ENCODE measurements at regions of chr15 and their contacts with region 1.

Region 1: DNA sequence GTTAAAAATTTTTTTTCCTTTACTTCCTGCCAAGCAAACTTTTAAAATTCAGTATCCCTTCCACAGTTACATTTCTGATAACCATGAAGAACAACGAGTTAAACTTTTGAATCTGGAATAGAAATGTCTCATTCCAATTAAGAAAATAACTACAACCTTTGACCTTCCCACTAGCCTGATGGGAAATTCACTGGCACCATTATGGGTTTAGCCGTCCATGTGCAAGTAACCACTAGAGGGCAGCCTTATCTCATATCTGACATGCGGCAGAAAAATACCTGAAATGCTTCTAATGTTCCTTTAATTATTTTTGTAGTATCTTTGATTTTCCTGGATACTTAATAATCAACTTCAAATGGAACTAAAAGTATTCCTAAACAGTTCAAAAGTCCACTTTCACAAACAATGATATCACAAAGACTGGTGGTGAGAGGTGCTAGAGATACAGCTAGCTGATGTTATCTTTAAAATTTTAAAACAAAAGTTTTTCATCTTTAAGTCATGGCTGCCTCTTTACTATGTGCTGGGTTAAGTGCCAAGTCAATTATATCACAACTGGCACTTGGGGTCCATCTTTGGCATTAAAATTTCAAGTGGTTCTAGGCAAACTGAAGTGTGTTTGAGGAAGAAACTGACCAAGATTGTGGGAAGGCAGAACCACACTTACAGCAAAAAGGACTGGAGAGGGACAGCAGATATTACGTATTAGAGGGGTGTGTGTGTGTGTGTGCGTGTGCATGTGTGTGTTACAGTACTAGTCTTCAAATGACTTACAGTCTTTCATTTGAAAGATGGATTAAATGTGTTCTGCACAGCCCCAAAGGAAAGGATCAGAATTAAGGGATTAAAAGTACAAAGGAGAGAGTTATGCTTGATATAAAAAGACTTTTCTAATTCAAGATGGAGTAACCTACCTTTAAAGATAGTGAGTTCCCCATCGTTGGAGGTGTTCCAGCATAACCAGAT is 107.1 kb upstream of the ICE2 start:
- DNase-seq: peak in 7 of 9 donors; percentile 59 to 80 (median 76)
- ATAC-seq: peak; percentile 67
- H3K4me3 ChIP-seq: no peak overlapping the region
- H3K4me3 Mint-ChIP-seq: peak overlapping the region; percentile 66 to 88 (median 75)
- H3K27ac ChIP-seq: peak overlapping the region; percentile 25
- H3K27ac Mint-ChIP-seq: peak overlapping the region; percentile 79 to 93 (median 90)
- H3K4me1 ChIP-seq: peaks cover 65 to 83% of the 10 kb centered on the region in 2 donors
- H3K4me1 Mint-ChIP-seq: peaks cover 55 to 96% (median 87%) of the 10 kb centered on the region in 7 donors
- H3K27me3 ChIP-seq: no peaks in the 10 kb centered on the region
- H3K27me3 Mint-ChIP-seq: peaks cover 0 to 4% (median 0%) of the 10 kb centered on the region in 5 donors

Region 2: GRCh38 chr15:59688841-59689625 is 897.0 kb before region 1 on chr15 and contains the start of gene BNIP2:
- CTCF ChIA-PET with region 1: interaction called, 3 read pairs
- POLR2A ChIA-PET with region 1: no interaction called
- intact Hi-C with region 1: loop called in 1 of 2 experiments (anchors 5 kb)
- DNase-seq: peak; percentile 94 to 100 (median 99)
- ATAC-seq: peak; percentile 95
- H3K4me3 ChIP-seq: peak within 1 kb of the TSS; percentile 97
- H3K4me3 Mint-ChIP-seq: peak within 1 kb of the TSS; percentile 90 to 98 (median 96)
- H3K27ac ChIP-seq: peak within 1 kb of the TSS; percentile 97
- H3K27ac Mint-ChIP-seq: peak within 1 kb of the TSS; percentile 81 to 99 (median 99)
- H3K4me1 ChIP-seq: peaks cover 29 to 30% of the 10 kb centered on the region in 2 donors
- H3K4me1 Mint-ChIP-seq: peaks cover 35 to 57% (median 49%) of the 10 kb centered on the region in 7 donors
- H3K27me3 ChIP-seq: no peaks in the 10 kb centered on the region
- H3K27me3 Mint-ChIP-seq: no peaks in the 10 kb centered on the region
- total RNA-seq, gene BNIP2: 76.1 to 116 (median 87.0) TPM

Region 3: DNA sequence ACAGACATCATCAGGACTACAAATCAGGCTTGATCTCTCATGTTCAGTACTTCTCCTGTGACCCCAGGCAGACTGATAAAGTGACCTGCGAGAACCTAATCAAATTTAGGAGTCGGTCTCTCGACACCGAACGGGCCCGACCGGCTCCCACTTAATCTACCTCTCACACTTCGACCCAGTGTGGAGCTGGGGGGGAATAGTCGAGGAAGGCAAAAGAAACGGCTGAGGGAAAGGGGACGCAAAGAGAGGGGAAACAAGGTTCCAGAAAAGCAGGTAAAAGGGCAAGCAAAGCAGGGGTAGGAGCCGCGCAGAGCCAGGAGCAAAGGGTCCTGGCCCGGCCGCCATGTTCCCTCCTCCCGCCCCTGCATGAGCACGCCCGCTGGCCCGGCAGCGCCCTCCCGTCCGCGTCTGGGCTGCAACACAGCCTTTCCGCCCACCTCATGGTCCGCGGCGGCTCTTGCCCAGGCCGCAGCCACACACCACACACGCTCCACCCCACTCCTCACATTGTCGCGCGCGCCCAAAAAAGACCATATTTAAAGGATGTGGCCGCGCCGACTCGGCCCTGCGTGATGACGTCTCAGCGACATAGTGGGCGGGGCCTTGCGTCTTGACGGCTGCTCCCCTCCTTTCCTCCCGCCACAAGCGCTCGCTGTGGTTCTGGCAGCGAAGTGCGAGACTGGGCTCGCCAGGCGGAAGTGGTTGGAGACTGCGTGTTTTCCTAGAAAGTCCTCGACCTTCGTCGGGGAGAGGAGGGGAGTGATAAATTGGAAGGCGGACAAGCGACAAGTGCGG is 107.3 kb before region 1 on chr15 and contains the start of gene ICE2:
- CTCF ChIA-PET with region 1: no interaction called
- POLR2A ChIA-PET with region 1: interaction called, 7 read pairs
- intact Hi-C with region 1: loop called in 1 of 2 experiments (anchors 2 kb)
- DNase-seq: peak; percentile 89 to 96 (median 94)
- ATAC-seq: peak; percentile 97
- H3K4me3 ChIP-seq: peak within 1 kb of the TSS; percentile 83
- H3K4me3 Mint-ChIP-seq: peak within 1 kb of the TSS; percentile 93 to 100 (median 98)
- H3K27ac ChIP-seq: peak within 1 kb of the TSS; percentile 93
- H3K27ac Mint-ChIP-seq: peak within 1 kb of the TSS; percentile 98 to 100 (median 99)
- H3K4me1 ChIP-seq: peaks cover 23 to 25% of the 10 kb centered on the region in 2 donors
- H3K4me1 Mint-ChIP-seq: peaks cover 43 to 86% (median 70%) of the 10 kb centered on the region in 7 donors
- H3K27me3 ChIP-seq: no peaks in the 10 kb centered on the region
- H3K27me3 Mint-ChIP-seq: no peaks in the 10 kb centered on the region
- total RNA-seq, gene ICE2: 44.8 to 70.9 (median 68.0) TPM

Region 4: GRCh38 chr15:60557191-60557618 is 28.8 kb before region 1 on chr15:
- CTCF ChIA-PET with region 1: interaction called, 11 read pairs
- POLR2A ChIA-PET with region 1: interaction called, 12 read pairs
- intact Hi-C with region 1: no loop called
- DNase-seq: peak in 5 of 9 donors; percentile 36 to 56 (median 51)
- ATAC-seq: peak; percentile 73
- H3K4me3 ChIP-seq: no peak overlapping the region
- H3K4me3 Mint-ChIP-seq: peak overlapping the region; percentile 2 to 67 (median 48)
- H3K27ac ChIP-seq: peak overlapping the region; percentile 51
- H3K27ac Mint-ChIP-seq: peak overlapping the region; percentile 26 to 87 (median 77)
- H3K4me1 ChIP-seq: peaks cover 21 to 48% of the 10 kb centered on the region in 2 donors
- H3K4me1 Mint-ChIP-seq: peaks cover 52 to 83% (median 79%) of the 10 kb centered on the region in 7 donors
- H3K27me3 ChIP-seq: no peaks in the 10 kb centered on the region
- H3K27me3 Mint-ChIP-seq: no peaks in the 10 kb centered on the region

Region 5: GRCh38 chr15:60720493-60721256 is 134.6 kb after region 1 on chr15:
- CTCF ChIA-PET with region 1: interaction called, 3 read pairs
- POLR2A ChIA-PET with region 1: interaction called, 4 read pairs
- intact Hi-C with region 1: loop called in 1 of 2 experiments (anchors 5 kb)
- DNase-seq: peak in 8 of 9 donors; percentile 31 to 68 (median 44)
- ATAC-seq: peak; percentile 81
- H3K4me3 ChIP-seq: peak overlapping the region; percentile 47
- H3K4me3 Mint-ChIP-seq: peak overlapping the region; percentile 64 to 84 (median 80)
- H3K27ac ChIP-seq: peak overlapping the region; percentile 6
- H3K27ac Mint-ChIP-seq: peak overlapping the region; percentile 63 to 92 (median 77)
- H3K4me1 ChIP-seq: peaks cover 27% of the 10 kb centered on the region in 2 donors
- H3K4me1 Mint-ChIP-seq: peaks cover 29 to 65% (median 53%) of the 10 kb centered on the region in 7 donors
- H3K27me3 ChIP-seq: no peaks in the 10 kb centered on the region
- H3K27me3 Mint-ChIP-seq: no peaks in the 10 kb centered on the region

Region 6: GRCh38 chr15:60905587-60905986 is 319.6 kb after region 1 on chr15:
- CTCF ChIA-PET with region 1: interaction called, 10 read pairs
- POLR2A ChIA-PET with region 1: no interaction called
- intact Hi-C with region 1: loop called in 1 of 2 experiments (anchors 1 kb)
- DNase-seq: peak in 6 of 9 donors; percentile 24 to 45 (median 38)
- ATAC-seq: peak; percentile 68
- H3K4me3 ChIP-seq: no peak overlapping the region
- H3K4me3 Mint-ChIP-seq: no peak overlapping the region
- H3K27ac ChIP-seq: no peak overlapping the region
- H3K27ac Mint-ChIP-seq: peak overlapping the region in 1 of 9 donors; percentile 16
- H3K4me1 ChIP-seq: no peaks in the 10 kb centered on the region
- H3K4me1 Mint-ChIP-seq: peaks cover 0 to 38% (median 2%) of the 10 kb centered on the region in 7 donors
- H3K27me3 ChIP-seq: no peaks in the 10 kb centered on the region
- H3K27me3 Mint-ChIP-seq: peaks cover 0 to 17% (median 0%) of the 10 kb centered on the region in 5 donors

Measured in naive thymus-derived CD4-positive, alpha-beta T cell (primary cell).